Mammary epithelial cell (primary cell): ENCODE measurements at regions of chr12 and their contacts with region 1.

Region 1: GRCh38 chr12:32198555-32198954 is 91.9 kb downstream of the BICD1 start:
- DNase-seq: peak; percentile 88
- H3K4me3 ChIP-seq: no peak overlapping the region
- H3K27ac ChIP-seq: peak overlapping the region; percentile 71
- H3K4me1 ChIP-seq: peaks cover 19% of the 10 kb centered on the region
- H3K27me3 ChIP-seq: no peaks in the 10 kb centered on the region
- CTCF ChIP-seq: no peak

Region 2: DNA sequence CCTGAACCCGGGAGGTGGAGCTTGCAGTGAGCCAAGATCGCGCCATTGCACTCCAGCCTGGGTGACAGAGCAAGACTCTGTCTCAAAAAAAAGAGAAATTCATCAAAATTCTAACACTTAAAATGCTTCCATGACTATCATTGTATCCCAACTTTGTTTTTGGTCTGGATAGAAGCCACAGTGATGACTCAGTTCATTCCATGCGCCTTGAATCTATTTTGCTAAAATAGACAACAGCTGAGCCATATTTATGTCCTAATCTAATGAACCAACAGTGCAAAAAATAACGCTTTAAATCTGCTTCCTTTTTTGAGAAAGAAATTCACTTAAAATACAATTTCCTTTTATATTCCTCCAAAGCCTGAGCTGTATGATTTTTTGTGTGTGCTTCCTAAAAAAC is 115.1 kb before region 1 on chr12:
- CTCF ChIA-PET with region 1: interaction called, 16 read pairs
- dilution Hi-C with region 1: no loop called
- in situ Hi-C with region 1: no loop called
- intact Hi-C with region 1: no loop called
- DNase-seq: peak; percentile 44
- H3K4me3 ChIP-seq: no peak overlapping the region
- H3K27ac ChIP-seq: no peak overlapping the region
- H3K4me1 ChIP-seq: no peaks in the 10 kb centered on the region
- H3K27me3 ChIP-seq: no peaks in the 10 kb centered on the region
- CTCF ChIP-seq: no peak

Region 3: GRCh38 chr12:32183650-32184049 is 14.9 kb before region 1 on chr12:
- CTCF ChIA-PET with region 1: interaction called, 11 read pairs
- dilution Hi-C with region 1: no loop called
- in situ Hi-C with region 1: no loop called
- intact Hi-C with region 1: no loop called
- DNase-seq: no peak
- H3K4me3 ChIP-seq: no peak overlapping the region
- H3K27ac ChIP-seq: no peak overlapping the region
- H3K4me1 ChIP-seq: no peaks in the 10 kb centered on the region
- H3K27me3 ChIP-seq: no peaks in the 10 kb centered on the region
- CTCF ChIP-seq: no peak